ENCODE measurements at regions of chrX and their contacts with region 1.

Region 1: DNA sequence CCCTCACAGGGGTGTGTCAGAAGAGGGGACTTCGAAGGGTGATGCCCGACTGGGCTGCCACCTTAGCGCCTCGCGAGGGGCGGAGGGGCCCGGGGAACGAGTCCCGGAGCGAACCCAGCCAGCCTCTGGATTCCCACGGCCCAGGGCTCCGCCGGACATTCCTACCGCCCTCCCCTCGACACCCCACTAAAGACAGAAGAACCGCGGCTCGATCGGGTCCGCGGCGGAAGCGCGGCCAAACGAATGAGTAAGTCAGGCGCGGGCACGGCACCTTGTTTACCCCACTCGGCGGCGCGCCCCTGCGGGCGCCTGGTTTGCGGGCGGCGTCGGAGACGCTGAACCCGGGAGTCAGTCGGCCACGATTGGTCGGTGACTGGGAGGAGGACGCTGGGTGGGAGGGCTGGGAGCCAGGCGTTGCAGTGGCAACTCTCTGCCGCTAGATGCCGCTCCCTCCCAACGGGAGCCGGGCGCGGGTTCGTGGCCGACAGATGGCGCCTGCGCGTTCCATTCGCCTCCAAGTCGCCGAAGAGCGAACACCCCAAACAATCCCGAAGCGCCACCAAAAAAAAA is 1.4 kb upstream of the STAG2 start:
- DNase-seq: peak; percentile 82 to 94 (median 89)
- ATAC-seq: peak; percentile 68
- H3K4me3 ChIP-seq: peak overlapping the region; percentile 57 to 80
- H3K4me3 Mint-ChIP-seq: peak overlapping the region; percentile 98
- H3K27ac ChIP-seq: peak overlapping the region; percentile 94 to 97
- H3K27ac Mint-ChIP-seq: peak overlapping the region; percentile 99
- H3K4me1 ChIP-seq: no peaks in the 10 kb centered on the region
- H3K4me1 Mint-ChIP-seq: peaks cover 21% of the 10 kb centered on the region
- H3K27me3 ChIP-seq: no peaks in the 10 kb centered on the region
- H3K27me3 Mint-ChIP-seq: no peaks in the 10 kb centered on the region
- CTCF ChIP-seq: peak; percentile 77

Region 2: GRCh38 chrX:123720483-123720882 is 239.6 kb before region 1 on chrX:
- CTCF ChIA-PET with region 1: no interaction called
- POLR2A ChIA-PET with region 1: no interaction called
- intact Hi-C with region 1: no loop called
- DNase-seq: no peak
- ATAC-seq: no peak
- H3K4me3 ChIP-seq: no peak overlapping the region
- H3K4me3 Mint-ChIP-seq: no peak overlapping the region
- H3K27ac ChIP-seq: no peak overlapping the region
- H3K27ac Mint-ChIP-seq: no peak overlapping the region
- H3K4me1 ChIP-seq: no peaks in the 10 kb centered on the region
- H3K4me1 Mint-ChIP-seq: peaks cover 36% of the 10 kb centered on the region
- H3K27me3 ChIP-seq: no peaks in the 10 kb centered on the region
- H3K27me3 Mint-ChIP-seq: no peaks in the 10 kb centered on the region
- CTCF ChIP-seq: no peak

Region 3: DNA sequence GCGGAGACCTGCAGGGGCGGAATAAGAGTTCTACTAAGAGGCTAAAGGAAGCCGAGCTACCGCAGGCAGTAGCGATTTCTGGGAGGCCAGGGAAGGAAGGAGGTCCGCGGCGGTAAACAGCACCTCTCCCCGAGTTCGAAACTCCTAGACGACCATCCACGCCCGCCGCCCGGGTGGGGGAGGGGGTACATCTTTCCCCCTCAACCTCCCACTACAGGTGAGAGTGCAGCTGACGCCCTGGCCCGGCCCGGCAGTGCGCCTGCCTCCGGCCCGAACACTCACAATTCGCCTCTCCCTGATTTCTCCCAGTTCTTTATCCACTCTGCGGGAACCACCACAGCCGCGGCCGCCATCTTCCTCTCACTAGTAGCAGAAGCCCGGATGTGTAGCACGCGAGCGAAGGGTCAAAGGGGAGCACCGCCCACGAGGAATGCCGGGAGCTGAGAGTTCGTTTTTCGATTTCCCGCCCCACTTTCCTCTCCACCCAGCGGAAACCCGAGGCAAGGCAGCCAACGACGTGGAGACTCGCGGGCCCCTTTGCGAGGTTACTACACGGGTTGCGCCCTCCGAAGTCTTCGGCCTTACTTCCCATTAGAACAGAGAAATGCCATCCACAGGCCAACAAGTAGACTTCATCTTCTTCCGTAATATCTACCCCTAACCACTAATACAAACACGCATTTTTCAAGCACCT is 227.3 kb before region 1 on chrX and contains the start of gene THOC2:
- CTCF ChIA-PET with region 1: no interaction called
- POLR2A ChIA-PET with region 1: no interaction called
- intact Hi-C with region 1: loop called (anchors 2 to 5 kb)
- DNase-seq: peak; percentile 51 to 89 (median 78)
- ATAC-seq: peak; percentile 93
- H3K4me3 ChIP-seq: peak within 1 kb of the TSS; percentile 79 to 95
- H3K4me3 Mint-ChIP-seq: peak within 1 kb of the TSS; percentile 95
- H3K27ac ChIP-seq: peak within 1 kb of the TSS; percentile 48 to 75
- H3K27ac Mint-ChIP-seq: peak within 1 kb of the TSS; percentile 91
- H3K4me1 ChIP-seq: peaks cover 20% of the 10 kb centered on the region
- H3K4me1 Mint-ChIP-seq: peaks cover 33% of the 10 kb centered on the region
- H3K27me3 ChIP-seq: no peaks in the 10 kb centered on the region
- H3K27me3 Mint-ChIP-seq: no peaks in the 10 kb centered on the region
- CTCF ChIP-seq: no peak
- total RNA-seq, gene THOC2: 64.8 to 67.2 TPM

Region 4: DNA sequence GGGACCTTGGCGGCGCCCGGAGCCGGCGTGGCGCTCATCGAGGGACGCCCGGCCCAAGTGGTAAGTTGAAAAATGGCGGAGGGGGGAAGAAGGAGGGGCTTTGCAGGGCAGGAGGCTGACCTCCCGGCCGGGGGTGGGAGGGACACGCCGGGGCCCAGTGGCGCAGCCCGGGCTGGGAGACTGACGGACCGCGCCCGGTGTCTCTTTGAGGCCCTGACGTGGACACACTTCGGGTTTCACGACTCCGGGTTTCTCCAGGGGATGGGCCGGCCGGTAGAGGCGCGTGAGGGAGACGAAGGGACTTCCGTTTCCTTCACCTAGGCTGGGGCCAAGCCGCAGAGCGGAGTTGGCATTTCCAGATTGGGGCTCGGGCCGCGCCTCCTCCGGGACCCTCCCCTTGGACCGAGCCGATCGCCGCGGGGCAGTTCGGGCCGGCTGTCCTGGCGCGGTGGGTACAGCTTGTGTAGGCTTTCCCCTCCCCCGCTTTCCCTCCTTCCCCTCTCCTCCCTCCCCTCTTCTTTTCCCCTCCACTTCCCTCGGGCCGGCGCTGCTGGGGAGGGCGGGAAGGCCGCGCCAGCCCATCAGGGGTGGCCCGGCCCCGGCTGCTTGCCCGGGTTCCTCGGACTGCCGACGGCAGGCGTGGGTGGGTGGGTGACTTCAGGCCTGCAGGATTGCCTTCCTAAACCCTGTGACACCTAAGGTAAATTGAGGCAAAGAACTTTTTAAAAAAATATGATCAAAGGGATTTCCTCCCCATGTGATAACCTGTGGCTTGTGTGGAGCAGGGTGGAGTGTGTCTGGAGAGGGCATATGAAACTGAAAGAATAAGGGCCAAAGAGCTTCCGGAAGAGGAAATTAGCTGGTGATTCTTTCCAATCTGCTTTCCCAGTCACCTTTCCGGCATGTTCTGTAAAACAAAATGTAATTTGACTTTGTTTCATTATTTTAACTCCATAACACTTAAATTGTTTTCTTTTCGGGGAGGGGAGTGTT is 100.0 kb before region 1 on chrX and contains the start of gene XIAP:
- CTCF ChIA-PET with region 1: no interaction called
- POLR2A ChIA-PET with region 1: no interaction called
- intact Hi-C with region 1: loop called in 1 of 2 experiments (anchors 2 kb)
- DNase-seq: peak; percentile 27 to 81 (median 61)
- ATAC-seq: peak; percentile 72
- H3K4me3 ChIP-seq: peak within 1 kb of the TSS; percentile 81
- H3K4me3 Mint-ChIP-seq: peak within 1 kb of the TSS; percentile 96
- H3K27ac ChIP-seq: peak within 1 kb of the TSS; percentile 83 to 95
- H3K27ac Mint-ChIP-seq: peak within 1 kb of the TSS; percentile 98
- H3K4me1 ChIP-seq: peaks cover 6% of the 10 kb centered on the region
- H3K4me1 Mint-ChIP-seq: peaks cover 21% of the 10 kb centered on the region
- H3K27me3 ChIP-seq: no peaks in the 10 kb centered on the region
- H3K27me3 Mint-ChIP-seq: no peaks in the 10 kb centered on the region
- CTCF ChIP-seq: no peak
- total RNA-seq, gene XIAP: 15.2 to 24.2 TPM

Region 5: DNA sequence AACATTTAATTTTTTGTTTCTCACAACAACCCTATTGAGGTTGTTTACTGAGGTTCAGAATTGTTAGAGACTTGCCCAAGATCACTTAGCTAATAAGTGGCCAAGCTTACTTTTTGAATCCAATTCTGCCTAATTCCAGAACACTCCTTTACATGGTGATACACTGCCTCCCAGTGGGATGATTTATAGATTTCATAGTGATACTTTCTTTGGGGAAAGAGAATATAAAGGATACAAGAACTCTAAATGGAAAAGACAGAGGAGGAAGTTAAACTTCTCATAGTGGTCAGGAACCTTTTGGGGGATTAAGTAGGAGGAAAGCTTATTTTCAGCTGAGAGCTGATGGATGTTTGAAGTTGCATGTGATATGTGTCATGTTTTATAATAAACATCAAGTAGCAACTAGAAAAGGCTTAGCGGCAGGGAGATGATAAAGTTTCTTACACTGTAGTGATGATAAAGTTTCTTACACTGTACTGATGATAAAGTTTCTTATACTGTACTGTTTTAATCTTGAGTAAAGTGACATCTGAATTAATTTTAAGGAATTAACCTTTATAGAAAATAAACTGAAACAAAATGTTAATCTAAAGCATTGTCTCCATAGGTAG is 16.7 kb after region 1 on chrX:
- CTCF ChIA-PET with region 1: interaction called, 3 read pairs
- POLR2A ChIA-PET with region 1: interaction called, 4 read pairs
- intact Hi-C with region 1: loop called (anchors 1 kb)
- DNase-seq: peak in 2 of 9 experiments; percentile 37 to 49
- ATAC-seq: peak; percentile 56
- H3K4me3 ChIP-seq: no peak overlapping the region
- H3K4me3 Mint-ChIP-seq: peak overlapping the region; percentile 54
- H3K27ac ChIP-seq: no peak overlapping the region
- H3K27ac Mint-ChIP-seq: peak overlapping the region; percentile 72
- H3K4me1 ChIP-seq: peaks cover 30% of the 10 kb centered on the region
- H3K4me1 Mint-ChIP-seq: peaks cover 56% of the 10 kb centered on the region
- H3K27me3 ChIP-seq: no peaks in the 10 kb centered on the region
- H3K27me3 Mint-ChIP-seq: no peaks in the 10 kb centered on the region
- CTCF ChIP-seq: peak; percentile 34

Region 6: GRCh38 chrX:124086411-124086810 is 126.3 kb after region 1 on chrX:
- CTCF ChIA-PET with region 1: no interaction called
- POLR2A ChIA-PET with region 1: interaction called, 3 read pairs
- intact Hi-C with region 1: loop called in 1 of 2 experiments (anchors 5 kb)
- DNase-seq: peak in 7 of 9 experiments; percentile 1 to 70 (median 16)
- ATAC-seq: peak; percentile 90
- H3K4me3 ChIP-seq: no peak overlapping the region
- H3K4me3 Mint-ChIP-seq: peak overlapping the region; percentile 32
- H3K27ac ChIP-seq: peak overlapping the region; percentile 36 to 43
- H3K27ac Mint-ChIP-seq: peak overlapping the region; percentile 94
- H3K4me1 ChIP-seq: peaks cover 7% of the 10 kb centered on the region
- H3K4me1 Mint-ChIP-seq: peaks cover 34% of the 10 kb centered on the region
- H3K27me3 ChIP-seq: no peaks in the 10 kb centered on the region
- H3K27me3 Mint-ChIP-seq: no peaks in the 10 kb centered on the region
- CTCF ChIP-seq: no peak

Region 7: GRCh38 chrX:124194199-124194598 is 234.1 kb after region 1 on chrX:
- CTCF ChIA-PET with region 1: no interaction called
- POLR2A ChIA-PET with region 1: no interaction called
- intact Hi-C with region 1: no loop called
- DNase-seq: no peak
- ATAC-seq: no peak
- H3K4me3 ChIP-seq: no peak overlapping the region
- H3K4me3 Mint-ChIP-seq: no peak overlapping the region
- H3K27ac ChIP-seq: no peak overlapping the region
- H3K27ac Mint-ChIP-seq: no peak overlapping the region
- H3K4me1 ChIP-seq: no peaks in the 10 kb centered on the region
- H3K4me1 Mint-ChIP-seq: no peaks in the 10 kb centered on the region
- H3K27me3 ChIP-seq: no peaks in the 10 kb centered on the region
- H3K27me3 Mint-ChIP-seq: no peaks in the 10 kb centered on the region
- CTCF ChIP-seq: no peak

Region 8: DNA sequence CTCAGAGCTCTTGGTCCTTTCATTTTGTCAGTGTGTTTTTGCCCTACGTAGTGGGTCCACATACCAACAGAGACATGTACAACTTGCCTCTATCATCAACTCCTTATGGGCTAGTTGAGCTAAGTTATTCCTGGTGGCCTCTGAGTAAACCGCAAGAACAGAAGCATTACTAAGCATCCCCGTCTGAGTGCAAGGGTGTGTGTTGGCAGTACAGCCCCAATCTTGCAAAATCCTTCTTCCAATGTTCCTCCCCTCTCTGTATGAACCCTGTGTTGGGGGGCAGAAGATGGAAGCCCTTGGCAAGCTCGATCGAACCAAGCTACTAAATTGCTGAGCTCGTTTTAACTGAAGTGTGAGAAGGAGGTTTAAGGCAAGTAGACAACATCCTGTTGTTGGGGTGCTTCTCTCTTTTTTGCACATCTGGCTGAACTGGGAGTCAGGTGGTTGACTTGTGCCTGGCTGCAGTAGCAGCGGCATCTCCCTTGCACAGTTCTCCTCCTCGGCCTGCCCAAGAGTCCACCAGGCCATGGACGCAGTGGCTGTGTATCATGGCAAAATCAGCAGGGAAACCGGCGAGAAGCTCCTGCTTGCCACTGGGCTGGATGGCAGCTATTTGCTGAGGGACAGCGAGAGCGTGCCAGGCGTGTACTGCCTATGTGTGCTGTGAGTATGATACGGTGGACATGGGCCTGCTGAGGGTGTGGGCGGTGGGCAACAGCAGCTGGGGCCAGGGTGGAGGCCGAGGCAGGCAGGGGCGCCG is 386.2 kb after region 1 on chrX and contains the start of gene SH2D1A:
- CTCF ChIA-PET with region 1: no interaction called
- POLR2A ChIA-PET with region 1: interaction called, 6 read pairs
- intact Hi-C with region 1: loop called (anchors 5 kb)
- DNase-seq: peak in 7 of 9 experiments; percentile 7 to 74 (median 32)
- ATAC-seq: peak; percentile 35
- H3K4me3 ChIP-seq: peak within 1 kb of the TSS; percentile 61 to 62
- H3K4me3 Mint-ChIP-seq: peak within 1 kb of the TSS; percentile 96
- H3K27ac ChIP-seq: peak within 1 kb of the TSS; percentile 70 to 84
- H3K27ac Mint-ChIP-seq: peak within 1 kb of the TSS; percentile 98
- H3K4me1 ChIP-seq: peaks cover 50% of the 10 kb centered on the region
- H3K4me1 Mint-ChIP-seq: peaks cover 49% of the 10 kb centered on the region
- H3K27me3 ChIP-seq: no peaks in the 10 kb centered on the region
- H3K27me3 Mint-ChIP-seq: no peaks in the 10 kb centered on the region
- CTCF ChIP-seq: no peak
- total RNA-seq, gene SH2D1A: 44.4 to 50.3 TPM